A673 (cell line): ENCODE measurements at regions of chr3 and their contacts with region 1.

Region 1: DNA sequence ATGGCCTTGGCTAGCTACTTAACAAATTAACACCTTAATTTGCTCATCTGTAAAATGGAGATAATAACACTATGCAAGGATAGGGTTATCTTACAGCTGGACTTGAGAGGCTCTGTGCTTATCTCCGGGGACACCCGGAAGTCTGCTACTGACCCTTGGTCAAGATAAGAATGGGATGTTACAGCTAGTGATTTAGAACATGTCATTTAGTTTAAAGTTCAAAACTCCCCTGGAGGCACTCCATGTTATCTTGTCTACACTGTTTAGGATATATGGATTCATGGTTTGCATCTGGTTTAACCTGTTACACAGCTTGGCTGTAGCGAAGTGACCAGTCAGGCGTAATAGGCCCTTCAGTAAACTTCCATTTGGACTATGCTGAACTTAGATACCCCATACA is 155.9 kb upstream of the CD96 start:
- DNase-seq: no peak
- H3K4me3 ChIP-seq: no peak overlapping the region
- H3K27ac ChIP-seq: no peak overlapping the region
- H3K4me1 ChIP-seq: no peaks in the 10 kb centered on the region
- H3K27me3 ChIP-seq: no peaks in the 10 kb centered on the region
- CTCF ChIP-seq: no peak

Region 2: GRCh38 chr3:111428301-111428700 is 42.2 kb after region 1 on chr3:
- CTCF ChIA-PET with region 1: interaction called, 15 read pairs
- POLR2A ChIA-PET with region 1: no interaction called
- intact Hi-C with region 1: no loop called
- DNase-seq: no peak
- H3K4me3 ChIP-seq: no peak overlapping the region
- H3K27ac ChIP-seq: no peak overlapping the region
- H3K4me1 ChIP-seq: no peaks in the 10 kb centered on the region
- H3K27me3 ChIP-seq: no peaks in the 10 kb centered on the region
- CTCF ChIP-seq: no peak